ENCODE measurements at regions of chr1 and their contacts with region 1.

Region 1: DNA sequence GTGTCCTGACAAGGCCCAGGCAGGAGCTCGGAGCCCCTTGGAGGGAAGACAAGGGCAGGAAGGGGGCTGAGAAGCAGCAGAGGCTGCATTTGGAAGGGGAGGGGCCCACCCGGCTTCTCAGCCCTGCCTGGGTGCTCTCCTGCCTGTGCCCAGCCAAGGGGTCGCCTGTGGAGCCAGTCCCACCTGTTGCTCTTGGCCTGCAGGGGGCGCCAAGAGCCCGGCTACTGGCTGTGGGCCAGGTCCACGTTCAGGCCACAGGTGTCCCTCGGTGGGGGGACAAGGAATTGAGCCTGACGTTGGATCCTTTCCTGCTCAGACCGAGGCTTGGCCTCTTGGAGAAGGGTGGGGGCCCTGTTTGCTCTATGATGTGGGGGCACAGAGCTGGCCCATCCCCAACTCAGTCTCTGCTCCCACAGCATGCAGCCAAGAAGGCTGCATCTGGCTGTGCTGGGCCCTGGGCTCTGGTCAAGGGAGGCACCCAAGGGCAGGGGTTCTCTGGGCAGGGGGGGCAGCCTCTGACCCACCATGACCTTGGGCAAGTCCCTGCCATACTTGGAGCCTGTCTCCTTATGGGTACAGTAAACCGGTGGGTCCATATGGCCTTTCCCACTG is 10.9 kb downstream of the WNT4 start:
- DNase-seq: peak; percentile 43 to 91
- H3K4me3 ChIP-seq: no peak overlapping the region
- H3K27ac ChIP-seq: no peak overlapping the region
- H3K4me1 ChIP-seq: peaks cover 4 to 25% (median 17%) of the 10 kb centered on the region in 4 experiments
- H3K27me3 ChIP-seq: 0 out of 7 replicates have a peak, but pooled peaks cover 0 to 2% (median 0%) of the 10 kb centered on the region in 4 experiments
- CTCF ChIP-seq: peak in 2 of 3 experiments; percentile 96 to 97; a peak in 3 of 4 replicates
- EP300 ChIP-seq: 0 out of 3 replicates have a peak, but pooled peaks of 1 of the 2 experiments have one; percentile 14
- POLR2A ChIP-seq: no peak
- RAD21 ChIP-seq: peak; percentile 98 to 100

Region 2: DNA sequence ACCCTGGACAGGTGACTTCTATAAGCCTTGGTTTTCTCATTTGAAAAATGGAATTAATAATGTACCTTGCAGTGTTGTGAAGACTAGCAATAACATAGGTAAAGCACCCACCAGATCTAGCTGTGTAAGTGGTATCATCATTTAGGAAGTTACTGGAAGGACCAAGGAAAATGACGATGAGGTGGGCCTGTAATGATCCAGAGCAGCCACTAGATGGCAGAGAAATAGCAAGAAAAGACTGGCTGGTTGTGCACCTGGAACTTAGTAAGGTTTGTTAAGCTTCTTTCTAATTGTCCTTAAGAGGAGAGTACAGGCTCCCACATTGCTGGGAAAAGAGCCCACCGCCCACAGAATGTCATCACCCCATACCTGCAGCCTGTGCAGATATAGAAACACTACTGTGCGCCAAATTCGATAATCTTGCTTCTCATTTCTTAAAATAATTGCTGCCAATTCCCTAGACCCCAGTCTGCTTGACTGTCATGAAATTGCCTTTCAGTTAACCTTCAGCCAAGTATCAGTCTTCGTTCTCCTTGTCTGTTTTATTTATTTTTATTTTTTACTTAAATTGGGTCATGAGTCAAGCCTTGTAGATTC is 26.3 kb before region 1 on chr1:
- CTCF ChIA-PET with region 1: interaction called, 46 read pairs
- POLR2A ChIA-PET with region 1: interaction called, 3 read pairs
- DNase-seq: no peak
- H3K4me3 ChIP-seq: no peak overlapping the region
- H3K27ac ChIP-seq: no peak overlapping the region
- H3K4me1 ChIP-seq: no peaks in the 10 kb centered on the region; a peak in 1 of 7 replicates
- H3K27me3 ChIP-seq: no peaks in the 10 kb centered on the region
- CTCF ChIP-seq: peak in 2 of 3 experiments; percentile 74 to 85; a peak in 3 of 4 replicates
- EP300 ChIP-seq: no peak
- POLR2A ChIP-seq: no peak
- RAD21 ChIP-seq: peak; percentile 84 to 89

Region 3: GRCh38 chr1:22121411-22121911 is 10.5 kb before region 1 on chr1:
- CTCF ChIA-PET with region 1: interaction called, 25 read pairs
- POLR2A ChIA-PET with region 1: no interaction called
- DNase-seq: no peak
- H3K4me3 ChIP-seq: no peak overlapping the region
- H3K27ac ChIP-seq: no peak overlapping the region
- H3K4me1 ChIP-seq: peaks cover 0 to 20% (median 16%) of the 10 kb centered on the region in 4 experiments; a peak in 6 of 7 replicates
- H3K27me3 ChIP-seq: no peaks in the 10 kb centered on the region
- CTCF ChIP-seq: no peak
- EP300 ChIP-seq: no peak
- POLR2A ChIP-seq: no peak
- RAD21 ChIP-seq: no peak

Region 4: GRCh38 chr1:22153660-22154437 is 21.9 kb after region 1 on chr1:
- CTCF ChIA-PET with region 1: interaction called, 11 read pairs
- POLR2A ChIA-PET with region 1: no interaction called
- DNase-seq: no peak
- H3K4me3 ChIP-seq: no peak overlapping the region
- H3K27ac ChIP-seq: no peak overlapping the region
- H3K4me1 ChIP-seq: no peaks in the 10 kb centered on the region
- H3K27me3 ChIP-seq: no peaks in the 10 kb centered on the region; a peak in 1 of 7 replicates
- CTCF ChIP-seq: no peak
- EP300 ChIP-seq: no peak
- POLR2A ChIP-seq: no peak
- RAD21 ChIP-seq: no peak

Region 5: GRCh38 chr1:22275721-22276395 is 143.9 kb after region 1 on chr1:
- CTCF ChIA-PET with region 1: interaction called, 14 read pairs
- POLR2A ChIA-PET with region 1: no interaction called
- DNase-seq: peak; percentile 44 to 93
- H3K4me3 ChIP-seq: no peak overlapping the region
- H3K27ac ChIP-seq: no peak overlapping the region
- H3K4me1 ChIP-seq: peaks cover 2 to 15% (median 9%) of the 10 kb centered on the region in 4 experiments
- H3K27me3 ChIP-seq: peaks cover 0 to 3% (median 0%) of the 10 kb centered on the region in 4 experiments; a peak in 3 of 7 replicates
- CTCF ChIP-seq: peak; percentile 81 to 98 (median 95)
- EP300 ChIP-seq: no peak
- POLR2A ChIP-seq: no peak
- RAD21 ChIP-seq: peak; percentile 84 to 87